ENCODE measurements at regions of chr17 and their contacts with region 1.

Region 1: DNA sequence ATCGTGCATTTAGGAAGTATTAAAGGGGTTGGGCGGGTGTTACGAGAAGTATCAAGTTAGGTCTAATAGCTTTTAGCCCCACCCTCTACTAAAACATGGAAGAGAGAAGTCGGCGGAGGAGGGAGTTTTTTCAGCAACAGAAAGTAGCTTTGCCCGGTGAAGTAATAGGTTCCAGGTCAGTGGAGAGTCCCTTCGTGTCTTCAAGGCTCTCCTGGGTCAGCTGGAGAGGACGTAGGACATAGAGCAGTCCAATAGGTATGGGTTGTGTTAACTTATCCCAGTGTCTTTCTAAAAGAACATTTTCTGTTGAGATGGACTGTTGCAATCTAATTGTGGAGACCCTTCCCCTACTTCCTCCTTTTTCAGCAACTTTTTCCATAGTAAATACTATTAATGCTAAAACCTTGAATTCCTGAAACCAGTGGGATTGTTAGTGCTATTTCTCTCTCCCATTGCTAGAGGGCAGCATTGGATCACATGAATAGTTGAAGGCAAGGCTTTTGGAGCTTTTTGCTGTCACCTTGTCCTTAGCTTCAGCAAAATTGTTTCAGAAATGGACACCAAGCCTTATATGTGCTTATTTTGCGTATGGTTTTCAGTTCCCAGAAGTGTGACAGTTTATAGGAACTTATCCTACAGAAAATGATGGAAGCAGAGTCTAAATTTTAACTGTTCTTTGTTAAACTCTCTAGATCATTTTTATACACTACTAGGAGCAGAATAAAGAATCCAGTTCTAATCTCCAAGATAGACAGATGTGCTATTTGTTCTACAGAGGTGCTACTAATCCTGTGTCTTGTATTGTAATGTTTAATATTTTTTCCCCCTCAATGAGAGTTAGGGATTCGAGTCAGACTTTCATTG is 38.4 kb downstream of the UTP18 start:
- DNase-seq: peak; percentile 65
- H3K4me3 ChIP-seq: no peak overlapping the region; a peak in 1 of 4 replicates
- H3K27ac ChIP-seq: no peak overlapping the region; a peak in 1 of 4 replicates
- H3K4me1 ChIP-seq: no peaks in the 10 kb centered on the region
- H3K27me3 ChIP-seq: no peaks in the 10 kb centered on the region
- CTCF ChIP-seq: peak; percentile 91
- EP300 ChIP-seq: no peak
- RAD21 ChIP-seq: peak; percentile 98

Region 2: DNA sequence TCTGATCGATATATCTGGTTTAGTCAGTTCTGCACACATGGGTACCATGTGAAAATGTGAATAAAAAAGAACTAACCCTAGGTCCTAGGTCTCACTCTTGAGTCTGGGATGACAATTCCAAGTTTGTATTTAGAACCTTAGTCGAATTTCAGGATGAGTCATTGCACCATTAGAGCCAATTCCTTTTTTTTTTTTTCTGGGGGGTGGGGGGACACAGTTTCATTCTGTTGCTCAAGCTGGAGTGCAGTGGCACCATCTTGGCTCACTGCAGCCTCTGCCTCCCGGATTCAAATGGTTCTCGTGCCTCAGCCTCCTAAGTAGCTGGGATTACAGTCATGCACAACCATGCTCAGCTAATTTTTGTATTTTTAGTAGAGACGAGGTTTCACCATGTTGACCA is 219.7 kb before region 1 on chr17:
- CTCF ChIA-PET with region 1: no interaction called
- POLR2A ChIA-PET with region 1: no interaction called
- DNase-seq: no peak
- H3K4me3 ChIP-seq: no peak overlapping the region
- H3K27ac ChIP-seq: peak overlapping the region in 1 of 2 experiments; percentile 38; a peak in 2 of 4 replicates
- H3K4me1 ChIP-seq: no peaks in the 10 kb centered on the region
- H3K27me3 ChIP-seq: no peaks in the 10 kb centered on the region
- CTCF ChIP-seq: no peak
- EP300 ChIP-seq: 0 out of 4 replicates have a peak, but pooled peaks of 1 of the 2 experiments have one; percentile 32
- RAD21 ChIP-seq: no peak

Region 3: GRCh38 chr17:51214920-51215319 is 83.8 kb before region 1 on chr17:
- CTCF ChIA-PET with region 1: no interaction called
- POLR2A ChIA-PET with region 1: no interaction called
- DNase-seq: no peak
- H3K4me3 ChIP-seq: no peak overlapping the region
- H3K27ac ChIP-seq: no peak overlapping the region
- H3K4me1 ChIP-seq: no peaks in the 10 kb centered on the region
- H3K27me3 ChIP-seq: no peaks in the 10 kb centered on the region
- CTCF ChIP-seq: no peak
- EP300 ChIP-seq: no peak
- RAD21 ChIP-seq: no peak

Region 4: GRCh38 chr17:51322390-51323029 is 23.8 kb after region 1 on chr17:
- CTCF ChIA-PET with region 1: interaction called, 27 read pairs
- POLR2A ChIA-PET with region 1: no interaction called
- DNase-seq: peak; percentile 52
- H3K4me3 ChIP-seq: no peak overlapping the region
- H3K27ac ChIP-seq: no peak overlapping the region
- H3K4me1 ChIP-seq: no peaks in the 10 kb centered on the region
- H3K27me3 ChIP-seq: no peaks in the 10 kb centered on the region
- CTCF ChIP-seq: peak; percentile 51
- EP300 ChIP-seq: no peak
- RAD21 ChIP-seq: peak; percentile 87

Region 5: DNA sequence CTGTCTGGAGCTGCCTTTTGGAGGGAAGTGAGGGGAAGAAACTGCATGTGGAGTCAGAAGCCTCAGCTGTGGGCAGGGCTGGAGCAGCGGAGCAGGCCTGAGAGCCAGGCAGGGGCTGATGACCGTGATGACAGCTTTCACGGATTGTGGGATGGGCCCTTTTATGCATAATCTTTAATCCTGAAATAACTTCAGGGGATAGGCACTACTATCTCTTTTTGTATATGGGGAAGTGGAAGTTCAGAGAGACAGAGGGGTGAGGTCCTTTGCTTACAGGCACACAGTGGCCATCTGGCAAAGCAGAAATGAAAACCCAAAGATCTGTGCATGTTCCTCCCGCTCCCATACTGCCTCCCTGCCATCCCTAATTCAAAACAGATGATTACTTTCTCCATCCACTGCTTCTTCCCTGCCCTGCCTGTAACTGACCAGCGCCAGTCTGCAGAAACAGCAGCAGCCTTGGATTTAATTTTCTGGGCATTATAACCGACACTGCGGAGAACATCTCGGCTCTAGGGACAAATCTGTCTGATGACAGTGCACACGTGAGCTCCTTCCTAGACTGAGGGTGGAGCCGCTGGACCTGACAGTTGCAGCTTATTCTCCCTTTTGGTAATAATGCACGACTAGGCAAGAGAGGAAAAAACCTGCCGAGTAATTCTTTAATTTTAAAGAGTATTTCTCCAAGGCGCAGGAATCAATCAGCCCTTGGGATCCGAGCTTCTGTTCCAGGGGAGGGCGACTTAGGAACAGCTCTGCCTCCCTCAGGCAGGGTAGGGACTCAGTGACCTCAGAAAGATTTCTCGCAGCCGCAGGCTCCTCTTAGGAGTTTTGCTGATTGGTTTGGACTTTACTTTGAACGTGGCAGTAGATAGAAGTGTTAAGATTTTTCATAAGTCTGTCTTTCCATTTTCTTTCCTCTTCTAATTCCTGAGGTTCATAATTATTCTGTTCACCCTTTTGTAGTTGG is 57.0 kb after region 1 on chr17:
- CTCF ChIA-PET with region 1: interaction called, 35 read pairs
- POLR2A ChIA-PET with region 1: interaction called, 3 read pairs
- DNase-seq: peak; percentile 84
- H3K4me3 ChIP-seq: peak overlapping the region in 1 of 2 experiments; percentile 20; a peak in 2 of 4 replicates
- H3K27ac ChIP-seq: peak overlapping the region; percentile 30 to 99; a peak in 3 of 4 replicates
- H3K4me1 ChIP-seq: peaks cover 0 to 41% of the 10 kb centered on the region in 2 experiments; a peak in 2 of 4 replicates
- H3K27me3 ChIP-seq: no peaks in the 10 kb centered on the region
- CTCF ChIP-seq: no peak
- EP300 ChIP-seq: peak in 1 of 2 experiments; percentile 91; a peak in 2 of 4 replicates
- RAD21 ChIP-seq: peak; percentile 51

Region 6: DNA sequence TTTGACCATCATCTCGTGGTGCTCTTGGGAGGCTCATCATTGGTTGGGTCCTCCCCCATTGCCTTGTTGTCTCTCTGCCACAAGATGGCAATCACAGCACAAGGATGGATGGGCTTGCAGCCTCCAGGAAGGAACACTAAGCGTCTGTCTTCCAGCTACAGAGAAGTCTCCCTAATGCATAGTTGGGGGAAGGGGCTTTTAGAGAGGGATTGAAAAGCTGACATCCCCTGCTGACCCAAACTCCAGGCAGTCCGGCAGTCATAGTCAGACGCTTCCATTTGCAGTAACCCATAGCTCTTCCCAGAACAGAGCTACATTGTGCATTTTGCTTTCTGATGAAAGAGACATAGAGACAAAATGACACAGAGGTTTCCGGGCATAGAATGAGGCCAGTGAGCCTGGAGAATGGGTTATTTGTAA is 73.0 kb after region 1 on chr17:
- CTCF ChIA-PET with region 1: interaction called, 88 read pairs
- POLR2A ChIA-PET with region 1: no interaction called
- DNase-seq: peak; percentile 85
- H3K4me3 ChIP-seq: peak overlapping the region in 1 of 2 experiments; percentile 10; a peak in 1 of 4 replicates
- H3K27ac ChIP-seq: peak overlapping the region in 1 of 2 experiments; percentile 4; a peak in 1 of 4 replicates
- H3K4me1 ChIP-seq: peaks cover 0 to 16% of the 10 kb centered on the region in 2 experiments; a peak in 1 of 4 replicates
- H3K27me3 ChIP-seq: no peaks in the 10 kb centered on the region
- CTCF ChIP-seq: peak; percentile 57
- EP300 ChIP-seq: no peak
- RAD21 ChIP-seq: peak; percentile 100

Region 7: DNA sequence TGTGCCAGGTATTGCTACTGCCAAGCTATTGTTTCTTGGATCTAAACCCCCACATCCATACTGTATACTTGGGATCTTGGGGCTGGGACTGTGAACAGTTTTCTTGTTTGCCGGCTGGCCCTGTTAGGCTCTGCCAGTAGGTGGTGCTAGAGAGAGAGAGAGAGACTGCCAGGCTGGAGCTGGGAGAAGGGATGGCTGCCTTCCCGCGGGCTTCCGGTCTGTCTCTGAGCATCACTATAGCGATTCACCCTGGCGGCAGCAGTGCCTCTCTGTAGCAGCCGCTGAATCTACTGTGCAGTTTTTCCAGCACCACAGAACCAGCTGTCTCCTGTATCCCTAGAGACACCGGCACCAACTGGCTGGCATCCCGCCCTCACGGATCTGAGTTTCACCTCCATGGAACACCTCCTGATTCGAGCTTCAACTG is 162.9 kb after region 1 on chr17:
- CTCF ChIA-PET with region 1: interaction called, 22 read pairs
- POLR2A ChIA-PET with region 1: no interaction called
- DNase-seq: peak; percentile 48
- H3K4me3 ChIP-seq: peak overlapping the region in 1 of 2 experiments; percentile 36; a peak in 1 of 4 replicates
- H3K27ac ChIP-seq: no peak overlapping the region
- H3K4me1 ChIP-seq: no peaks in the 10 kb centered on the region
- H3K27me3 ChIP-seq: no peaks in the 10 kb centered on the region
- CTCF ChIP-seq: peak; percentile 60
- EP300 ChIP-seq: no peak
- RAD21 ChIP-seq: peak; percentile 62

Region 8: DNA sequence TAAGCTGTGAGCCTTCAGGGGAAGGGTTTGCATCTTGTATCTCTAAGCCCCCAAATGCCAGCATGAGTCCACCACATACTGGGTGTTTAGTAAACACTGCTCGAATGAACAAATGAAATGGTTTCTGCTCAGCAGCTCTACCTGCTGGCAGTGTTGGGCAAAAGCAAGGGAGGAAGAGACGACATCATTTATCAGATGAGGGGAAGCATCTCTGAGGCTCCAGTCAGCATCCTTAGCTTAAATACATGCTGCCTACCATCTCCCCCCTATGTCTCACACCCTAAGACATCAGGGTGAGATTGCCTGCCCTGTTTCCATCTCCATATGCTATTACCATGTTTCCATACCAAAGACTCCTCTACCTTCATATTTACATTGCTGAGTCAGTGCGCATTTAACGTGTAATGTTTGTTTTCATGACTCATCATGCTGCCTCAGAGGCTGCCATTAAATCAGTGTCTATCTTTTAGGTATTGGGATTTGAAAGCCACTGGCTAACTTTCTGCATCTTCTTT is 341.4 kb after region 1 on chr17:
- CTCF ChIA-PET with region 1: interaction called, 17 read pairs
- POLR2A ChIA-PET with region 1: no interaction called
- DNase-seq: peak; percentile 27
- H3K4me3 ChIP-seq: no peak overlapping the region
- H3K27ac ChIP-seq: no peak overlapping the region
- H3K4me1 ChIP-seq: no peaks in the 10 kb centered on the region
- H3K27me3 ChIP-seq: no peaks in the 10 kb centered on the region
- CTCF ChIP-seq: no peak
- EP300 ChIP-seq: no peak
- RAD21 ChIP-seq: peak; percentile 61

Measured in SK-N-SH (cell line).